Gastrocnemius medialis (tissue), 4 donors: ENCODE measurements at regions of chr2 and their contacts with region 1.

Region 1: GRCh38 chr2:145431181-145431951 is 911.4 kb upstream of the ZEB2 start:
- DNase-seq: no peak
- ATAC-seq: no peak
- H3K4me3 ChIP-seq: no peak overlapping the region
- H3K27ac ChIP-seq: no peak overlapping the region
- H3K4me1 ChIP-seq: no peaks in the 10 kb centered on the region
- H3K27me3 ChIP-seq: no peaks in the 10 kb centered on the region
- CTCF ChIP-seq: no peak
- POLR2A ChIP-seq: no peak

Region 2: GRCh38 chr2:145258903-145259579 is 172.3 kb before region 1 on chr2:
- in situ Hi-C with region 1: no loop called
- intact Hi-C with region 1: no loop called
- DNase-seq: no peak
- ATAC-seq: no peak
- H3K4me3 ChIP-seq: no peak overlapping the region
- H3K27ac ChIP-seq: no peak overlapping the region
- H3K4me1 ChIP-seq: no peaks in the 10 kb centered on the region
- H3K27me3 ChIP-seq: no peaks in the 10 kb centered on the region
- CTCF ChIP-seq: no peak
- POLR2A ChIP-seq: no peak

Region 3: DNA sequence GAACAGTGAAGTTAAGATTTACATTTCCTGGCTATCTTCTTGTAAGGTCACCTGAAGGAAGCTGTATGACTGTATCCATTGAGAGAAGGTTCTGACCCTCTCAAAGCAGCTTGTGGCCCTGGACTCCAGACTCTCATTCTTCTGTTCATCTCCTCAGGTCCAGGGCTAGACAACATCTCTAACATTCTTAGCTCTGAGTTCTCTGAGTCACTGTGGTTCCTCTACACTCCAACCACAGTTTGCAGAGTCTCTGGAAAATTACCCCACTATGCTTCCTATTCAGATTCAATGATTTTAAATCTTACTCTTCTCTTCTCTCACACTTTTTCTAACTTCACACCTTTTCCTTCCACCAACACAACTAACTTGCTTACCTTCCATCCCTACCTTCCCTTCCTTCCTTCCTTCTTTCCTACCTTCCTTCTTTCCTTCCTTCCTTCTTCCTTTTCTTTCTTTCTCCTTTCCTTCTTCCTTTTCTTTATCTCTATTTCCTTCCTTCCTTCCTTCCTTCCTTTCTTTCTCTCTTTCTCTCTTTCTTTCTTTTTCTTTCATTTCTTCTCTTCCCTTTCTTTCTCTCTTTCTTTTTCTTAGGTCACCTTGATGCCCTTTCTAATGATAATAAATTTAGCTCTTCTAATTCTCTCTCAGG is 87.2 kb before region 1 on chr2:
- in situ Hi-C with region 1: loop called in 1 of 4 experiments (anchors 25 kb)
- intact Hi-C with region 1: no loop called
- DNase-seq: no peak
- ATAC-seq: no peak
- H3K4me3 ChIP-seq: no peak overlapping the region
- H3K27ac ChIP-seq: no peak overlapping the region
- H3K4me1 ChIP-seq: no peaks in the 10 kb centered on the region
- H3K27me3 ChIP-seq: no peaks in the 10 kb centered on the region
- CTCF ChIP-seq: no peak
- POLR2A ChIP-seq: no peak